Left lung (tissue), 14 donors: ENCODE measurements at regions of chr2 and their contacts with region 1.

Region 1: DNA sequence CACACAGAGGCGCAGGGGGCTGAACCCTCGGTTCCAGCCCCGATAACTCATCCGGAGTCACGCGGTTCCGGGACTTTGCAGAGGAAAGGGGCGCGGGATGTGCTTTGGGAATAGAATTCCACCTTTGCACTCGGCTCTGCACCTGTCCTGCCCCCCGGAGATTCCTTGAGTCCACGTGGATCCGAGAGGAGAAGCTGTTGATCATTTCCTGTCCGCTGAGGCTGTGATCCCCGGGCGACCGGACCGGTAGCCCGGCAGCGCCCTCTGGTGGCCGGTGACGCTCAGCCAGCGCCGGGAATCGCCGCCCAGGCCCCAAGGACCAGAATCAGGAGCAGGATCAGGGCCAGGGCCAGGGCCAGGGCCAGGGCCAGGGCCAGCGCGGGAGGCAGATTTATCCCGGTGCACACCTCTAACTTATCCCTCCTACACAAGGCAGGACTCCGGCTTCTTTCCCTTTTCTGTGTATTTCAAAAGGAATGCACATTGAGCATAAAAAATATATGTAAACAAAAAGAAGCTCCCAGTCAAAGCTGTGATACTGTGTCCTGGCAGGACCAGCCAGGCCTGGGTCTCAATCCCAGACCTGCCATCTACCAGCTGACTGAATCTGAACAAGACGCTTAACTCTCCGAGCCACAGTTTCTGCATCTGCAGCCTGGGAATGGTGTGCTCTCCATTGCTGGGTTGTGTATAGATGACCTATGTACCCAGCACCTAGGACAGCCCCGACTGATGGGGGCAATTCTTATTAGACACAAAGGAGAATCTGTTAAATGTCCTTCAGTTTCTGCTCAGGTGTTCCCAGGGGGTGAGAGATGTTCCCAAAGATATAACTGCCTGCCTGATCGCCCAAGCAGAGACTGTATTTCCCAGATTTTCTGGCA is 8.5 kb upstream of the SPATA3 start:
- DNase-seq: peak; percentile 73 to 96 (median 80)
- ATAC-seq: peak; percentile 98
- H3K4me3 ChIP-seq: peak overlapping the region in 1 of 2 donors; percentile 13
- H3K27ac ChIP-seq: no peak overlapping the region
- H3K4me1 ChIP-seq: peaks cover 0 to 3% of the 10 kb centered on the region in 2 donors
- H3K27me3 ChIP-seq: peaks cover 15 to 42% of the 10 kb centered on the region in 2 donors
- CTCF ChIP-seq: peak; percentile 96 to 97

Region 2: GRCh38 chr2:230824406-230824978 is 162.9 kb before region 1 on chr2:
- intact Hi-C with region 1: loop called in 1 of 2 experiments (anchors 5 kb)
- DNase-seq: peak in 2 of 4 donors; percentile 76 to 89
- ATAC-seq: peak; percentile 88
- H3K4me3 ChIP-seq: no peak overlapping the region
- H3K27ac ChIP-seq: no peak overlapping the region
- H3K4me1 ChIP-seq: peaks cover 11 to 15% of the 10 kb centered on the region in 2 donors
- H3K27me3 ChIP-seq: peaks cover 10 to 49% of the 10 kb centered on the region in 2 donors
- CTCF ChIP-seq: peak; percentile 54 to 75

Region 3: GRCh38 chr2:230902180-230902899 is 85.0 kb before region 1 on chr2:
- intact Hi-C with region 1: loop called in 1 of 2 experiments (anchors 5 kb)
- DNase-seq: peak in 2 of 4 donors; percentile 15 to 77
- ATAC-seq: peak; percentile 72
- H3K4me3 ChIP-seq: no peak overlapping the region
- H3K27ac ChIP-seq: no peak overlapping the region
- H3K4me1 ChIP-seq: no peaks in the 10 kb centered on the region
- H3K27me3 ChIP-seq: no peaks in the 10 kb centered on the region
- CTCF ChIP-seq: peak; percentile 34 to 49

Region 4: GRCh38 chr2:231280846-231281245 is 293.5 kb after region 1 on chr2:
- intact Hi-C with region 1: no loop called
- DNase-seq: no peak
- ATAC-seq: no peak
- H3K4me3 ChIP-seq: no peak overlapping the region
- H3K27ac ChIP-seq: no peak overlapping the region
- H3K4me1 ChIP-seq: no peaks in the 10 kb centered on the region
- H3K27me3 ChIP-seq: no peaks in the 10 kb centered on the region
- CTCF ChIP-seq: no peak